ENCODE measurements at regions of chr2 and their contacts with region 1.

Region 1: GRCh38 chr2:225660262-225661131 is 261.0 kb downstream of the NYAP2 start:
- DNase-seq: no peak
- H3K4me3 ChIP-seq: no peak overlapping the region
- H3K27me3 ChIP-seq: peaks cover 2% of the 10 kb centered on the region; the same call in 1 of the 2 replicates
- CTCF ChIP-seq: peak; percentile 88

Region 2: GRCh38 chr2:224195925-224196571 is 1464.4 kb before region 1 on chr2:
- CTCF ChIA-PET with region 1: no interaction called
- POLR2A ChIA-PET with region 1: interaction called, 11 read pairs
- DNase-seq: no peak
- H3K4me3 ChIP-seq: no peak overlapping the region
- H3K27me3 ChIP-seq: no peaks in the 10 kb centered on the region
- CTCF ChIP-seq: no peak

Region 3: DNA sequence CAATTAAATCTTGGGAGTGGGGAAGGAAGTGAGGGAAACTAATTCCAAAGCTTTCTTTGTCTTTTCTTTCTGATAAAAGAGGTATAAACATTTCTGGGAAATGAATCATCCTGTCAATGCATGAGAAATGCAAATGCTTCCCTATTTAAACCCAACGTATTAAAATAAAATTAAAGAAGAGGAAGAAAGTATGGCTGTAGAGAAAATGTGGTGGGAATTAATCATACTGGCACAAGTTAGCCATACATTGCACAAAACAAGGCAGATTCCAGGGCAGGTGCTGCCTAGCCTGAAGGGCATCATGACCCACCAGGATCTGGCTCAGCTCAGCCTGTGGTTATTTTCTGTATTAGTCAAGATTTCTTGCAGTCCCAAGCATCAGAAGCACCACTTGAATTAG is 77.1 kb after region 1 on chr2:
- CTCF ChIA-PET with region 1: no interaction called
- POLR2A ChIA-PET with region 1: no interaction called
- DNase-seq: no peak
- H3K4me3 ChIP-seq: no peak overlapping the region
- H3K27me3 ChIP-seq: no peaks in the 10 kb centered on the region
- CTCF ChIP-seq: no peak

Region 4: DNA sequence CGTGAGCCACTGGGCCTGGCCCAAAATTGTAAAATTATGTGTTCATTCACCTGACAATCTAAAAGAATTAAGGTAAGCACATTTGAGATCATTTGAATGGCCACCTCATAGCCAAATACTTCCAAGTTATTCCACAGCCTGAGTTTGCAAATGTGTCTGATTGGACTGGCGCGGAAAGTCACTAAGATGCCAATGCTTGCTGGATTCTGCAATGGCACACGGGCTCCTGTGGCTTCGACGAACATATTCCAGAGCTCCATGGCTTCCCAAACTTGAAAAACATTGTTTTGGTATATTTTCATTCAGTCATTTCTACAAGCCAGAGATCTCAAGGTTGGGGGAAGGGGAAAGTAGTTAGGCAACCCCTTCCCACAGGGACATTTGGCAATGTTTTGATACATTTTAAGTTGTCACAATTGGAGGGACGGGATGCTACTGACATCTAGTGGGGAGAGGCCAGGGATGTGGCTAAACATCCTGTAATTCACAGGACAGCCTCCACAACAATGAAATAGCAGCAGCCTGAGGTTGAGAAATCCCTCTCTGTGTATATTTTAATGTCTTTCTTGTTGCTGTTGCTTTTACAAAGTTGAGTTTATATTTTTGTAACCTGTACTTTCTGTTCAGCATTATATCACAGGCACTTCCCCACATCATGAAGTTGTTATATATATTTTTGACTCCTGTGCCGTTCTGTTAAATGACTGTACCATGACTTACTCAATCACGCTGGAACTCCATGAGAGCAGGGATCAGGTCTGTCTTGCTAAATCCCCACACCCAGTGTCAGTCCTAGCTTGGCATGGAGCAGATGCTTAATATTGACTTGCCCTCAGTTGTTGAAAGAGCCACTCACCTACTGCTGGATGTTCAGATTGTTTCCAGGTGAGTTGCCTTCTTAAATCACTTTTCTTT is 1446.6 kb after region 1 on chr2:
- CTCF ChIA-PET with region 1: interaction called, 12 read pairs
- POLR2A ChIA-PET with region 1: no interaction called
- DNase-seq: peak; percentile 11
- H3K4me3 ChIP-seq: no peak overlapping the region
- H3K27me3 ChIP-seq: no peaks in the 10 kb centered on the region
- CTCF ChIP-seq: peak; percentile 85